K562 (cell line): ENCODE measurements at regions of chr9 and their contacts with region 1.

Region 1: GRCh38 chr9:130756037-130756436 is 62.5 kb downstream of the EXOSC2 start:
- DNase-seq: no peak
- ATAC-seq: no peak
- H3K4me3 ChIP-seq: no peak overlapping the region
- H3K27ac ChIP-seq: no peak overlapping the region
- H3K4me1 ChIP-seq: no peaks in the 10 kb centered on the region; a peak in 1 of 5 replicates
- H3K27me3 ChIP-seq: no peaks in the 10 kb centered on the region
- CTCF ChIP-seq: no peak
- EP300 ChIP-seq: no peak
- POLR2A ChIP-seq: no peak
- RAD21 ChIP-seq: no peak

Region 2: DNA sequence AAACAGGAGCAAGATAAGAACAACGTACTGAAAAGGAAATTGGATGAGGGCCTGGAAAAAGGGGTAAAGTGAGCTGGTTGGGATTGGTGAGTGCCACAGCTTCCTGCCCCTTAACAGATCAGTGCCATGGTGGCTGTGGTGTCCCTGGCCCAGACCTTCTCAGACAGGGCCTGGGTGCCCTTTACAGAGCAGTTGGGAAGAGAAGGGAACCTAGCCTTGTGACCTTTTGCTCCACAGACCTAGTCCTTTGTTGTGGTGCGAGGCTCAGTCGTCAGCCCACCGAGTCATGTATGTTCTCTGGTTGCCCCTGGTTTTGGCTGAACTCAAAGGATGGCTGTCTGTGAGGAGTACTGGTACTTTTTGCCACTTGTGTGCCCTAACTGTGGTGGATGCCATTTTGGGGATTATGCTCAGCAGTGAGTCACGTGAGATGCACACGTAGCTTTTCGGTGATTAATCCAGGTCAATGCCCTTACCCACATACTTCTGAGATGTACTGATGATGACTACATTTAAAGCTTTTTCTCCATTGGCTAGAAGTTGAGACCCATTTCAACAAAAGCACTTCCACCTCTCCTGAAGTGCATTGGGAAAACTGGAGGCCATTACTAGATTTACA is 14.1 kb before region 1 on chr9:
- CTCF ChIA-PET with region 1: interaction called, 7 read pairs
- POLR2A ChIA-PET with region 1: interaction called, 141 read pairs
- in situ Hi-C with region 1: no loop called
- intact Hi-C with region 1: no loop called
- DNase-seq: peak; percentile 21 to 60 (median 54)
- ATAC-seq: no peak
- H3K4me3 ChIP-seq: no peak overlapping the region
- H3K27ac ChIP-seq: no peak overlapping the region
- H3K4me1 ChIP-seq: no peaks in the 10 kb centered on the region
- H3K27me3 ChIP-seq: no peaks in the 10 kb centered on the region
- CTCF ChIP-seq: no peak
- EP300 ChIP-seq: no peak
- POLR2A ChIP-seq: no peak
- RAD21 ChIP-seq: no peak

Region 3: GRCh38 chr9:130770679-130771442 is 14.8 kb after region 1 on chr9:
- CTCF ChIA-PET with region 1: interaction called, 8 read pairs
- POLR2A ChIA-PET with region 1: interaction called, 60 read pairs
- in situ Hi-C with region 1: no loop called
- intact Hi-C with region 1: no loop called
- DNase-seq: peak; percentile 91 to 98 (median 95)
- ATAC-seq: peak; percentile 89
- H3K4me3 ChIP-seq: no peak overlapping the region
- H3K27ac ChIP-seq: no peak overlapping the region
- H3K4me1 ChIP-seq: peaks cover 6 to 8% of the 10 kb centered on the region in 2 experiments; a peak in 4 of 5 replicates
- H3K27me3 ChIP-seq: no peaks in the 10 kb centered on the region
- CTCF ChIP-seq: no peak
- EP300 ChIP-seq: no peak
- POLR2A ChIP-seq: no peak
- RAD21 ChIP-seq: no peak

Region 4: DNA sequence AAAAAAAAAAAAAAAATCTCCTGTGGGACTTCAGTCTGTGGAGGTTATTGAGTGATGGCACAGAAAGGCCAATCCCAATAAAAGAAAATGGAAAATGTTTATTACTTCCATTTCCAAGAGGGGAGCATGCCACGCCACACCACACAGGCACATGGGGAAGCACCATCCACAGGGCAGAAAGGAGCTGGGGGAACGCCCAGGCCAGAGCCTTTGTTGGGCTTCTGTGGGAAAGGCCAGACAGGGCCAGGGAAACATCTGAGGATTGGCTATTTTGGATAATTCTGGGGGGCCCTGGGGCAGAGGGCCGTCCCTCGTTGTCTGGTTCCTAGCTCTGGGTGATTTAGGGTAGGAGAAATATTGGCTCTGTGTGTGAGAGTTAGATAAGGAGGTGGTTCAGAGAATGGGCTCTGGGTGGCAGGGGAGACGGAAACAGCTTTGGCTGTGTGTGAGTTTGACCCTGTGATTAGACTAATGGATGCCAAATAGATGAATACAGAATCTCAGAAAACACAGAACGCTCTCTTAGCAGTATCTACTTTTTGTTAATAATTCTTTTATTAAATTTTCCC is 30.0 kb after region 1 on chr9:
- CTCF ChIA-PET with region 1: no interaction called
- POLR2A ChIA-PET with region 1: interaction called, 19 read pairs
- in situ Hi-C with region 1: no loop called
- intact Hi-C with region 1: no loop called
- DNase-seq: peak in 2 of 4 experiments; percentile 71 to 80
- ATAC-seq: peak; percentile 63
- H3K4me3 ChIP-seq: no peak overlapping the region
- H3K27ac ChIP-seq: no peak overlapping the region
- H3K4me1 ChIP-seq: peaks cover 0 to 6% of the 10 kb centered on the region in 2 experiments; a peak in 2 of 5 replicates
- H3K27me3 ChIP-seq: no peaks in the 10 kb centered on the region
- CTCF ChIP-seq: no peak
- EP300 ChIP-seq: no peak
- POLR2A ChIP-seq: no peak
- RAD21 ChIP-seq: no peak

Region 5: DNA sequence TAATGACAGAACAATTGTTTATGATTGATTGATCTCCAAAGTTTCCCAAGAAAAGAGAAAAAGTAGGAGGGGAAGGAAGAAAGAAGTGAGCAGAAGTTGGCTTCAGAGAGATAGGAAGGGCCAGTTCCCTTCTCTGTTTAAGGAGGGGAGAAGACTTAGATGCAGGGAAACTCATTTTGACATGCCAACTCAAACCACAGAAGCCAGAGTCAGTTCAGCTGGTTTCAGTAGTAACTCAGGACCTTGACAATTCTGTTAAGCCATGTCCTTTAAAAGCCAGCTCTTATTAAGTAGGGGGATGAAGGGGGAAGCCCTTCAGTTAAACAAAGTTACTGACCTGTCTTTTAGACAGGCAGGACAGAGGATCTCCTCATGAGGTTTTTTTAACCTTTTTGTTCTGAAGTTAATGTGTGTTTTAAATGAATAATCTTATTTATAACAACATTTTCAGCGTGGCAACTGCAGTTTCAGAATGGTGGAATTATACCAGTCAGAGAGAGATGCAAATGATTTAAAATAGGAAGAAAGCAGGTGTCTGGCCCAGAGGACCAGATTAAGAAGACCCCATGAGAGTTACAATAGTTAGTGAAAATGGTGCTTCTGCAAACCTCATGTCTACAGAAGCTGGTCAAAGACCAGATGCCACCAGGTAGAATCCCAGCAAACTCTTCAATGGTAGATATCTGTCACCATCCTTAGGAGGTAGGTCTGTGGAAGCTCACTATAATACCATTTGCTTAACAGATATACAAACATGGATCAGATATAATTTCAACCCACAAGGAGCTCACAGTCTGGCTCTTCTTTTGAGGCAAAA is 49.7 kb after region 1 on chr9:
- CTCF ChIA-PET with region 1: no interaction called
- POLR2A ChIA-PET with region 1: interaction called, 4 read pairs
- in situ Hi-C with region 1: no loop called
- intact Hi-C with region 1: loop called (anchors 5 kb)
- DNase-seq: peak in 1 of 4 experiments; percentile 49
- ATAC-seq: peak; percentile 10; the same call in 2 of the 3 replicates
- H3K4me3 ChIP-seq: no peak overlapping the region
- H3K27ac ChIP-seq: no peak overlapping the region
- H3K4me1 ChIP-seq: no peaks in the 10 kb centered on the region
- H3K27me3 ChIP-seq: no peaks in the 10 kb centered on the region
- CTCF ChIP-seq: no peak
- EP300 ChIP-seq: no peak
- POLR2A ChIP-seq: no peak
- RAD21 ChIP-seq: no peak